Caco-2 (cell line): ENCODE measurements at regions of chr6 and their contacts with region 1.

Region 1: GRCh38 chr6:142112451-142113061 is 20.2 kb upstream of the GJE1 start:
- DNase-seq: peak; percentile 72 to 76
- H3K4me3 ChIP-seq: no peak overlapping the region
- H3K4me3 Mint-ChIP-seq: no peak overlapping the region
- H3K27ac Mint-ChIP-seq: no peak overlapping the region
- H3K4me1 ChIP-seq: no peaks in the 10 kb centered on the region
- H3K4me1 Mint-ChIP-seq: no peaks in the 10 kb centered on the region
- H3K27me3 ChIP-seq: no peaks in the 10 kb centered on the region
- H3K27me3 Mint-ChIP-seq: peaks cover 4% of the 10 kb centered on the region
- CTCF ChIP-seq: peak; percentile 71 to 86

Region 2: DNA sequence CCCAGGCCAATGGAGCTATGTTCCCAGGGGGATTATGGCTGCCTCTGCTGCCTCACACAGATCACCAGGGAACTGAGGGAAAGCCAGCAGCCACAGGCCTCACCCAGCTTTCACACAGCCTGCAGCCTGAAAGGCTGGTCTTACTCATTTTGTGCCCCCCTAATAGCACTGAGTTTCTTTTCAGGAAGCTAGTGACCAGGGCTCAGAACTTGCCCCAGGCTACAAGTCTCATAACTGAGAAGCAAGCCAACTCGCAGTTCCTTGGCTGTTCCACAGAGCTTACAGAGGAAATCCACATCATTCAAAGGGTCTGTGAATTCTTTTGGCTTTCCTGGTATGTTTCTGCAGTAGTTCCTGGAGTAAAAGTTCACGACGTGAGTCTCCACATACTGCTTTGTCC is 504.6 kb before region 1 on chr6:
- CTCF ChIA-PET with region 1: no interaction called
- POLR2A ChIA-PET with region 1: no interaction called
- intact Hi-C with region 1: no loop called
- DNase-seq: no peak
- H3K4me3 ChIP-seq: no peak overlapping the region
- H3K4me3 Mint-ChIP-seq: no peak overlapping the region
- H3K27ac Mint-ChIP-seq: no peak overlapping the region
- H3K4me1 ChIP-seq: no peaks in the 10 kb centered on the region
- H3K4me1 Mint-ChIP-seq: no peaks in the 10 kb centered on the region
- H3K27me3 ChIP-seq: no peaks in the 10 kb centered on the region
- H3K27me3 Mint-ChIP-seq: no peaks in the 10 kb centered on the region
- CTCF ChIP-seq: no peak

Region 3: DNA sequence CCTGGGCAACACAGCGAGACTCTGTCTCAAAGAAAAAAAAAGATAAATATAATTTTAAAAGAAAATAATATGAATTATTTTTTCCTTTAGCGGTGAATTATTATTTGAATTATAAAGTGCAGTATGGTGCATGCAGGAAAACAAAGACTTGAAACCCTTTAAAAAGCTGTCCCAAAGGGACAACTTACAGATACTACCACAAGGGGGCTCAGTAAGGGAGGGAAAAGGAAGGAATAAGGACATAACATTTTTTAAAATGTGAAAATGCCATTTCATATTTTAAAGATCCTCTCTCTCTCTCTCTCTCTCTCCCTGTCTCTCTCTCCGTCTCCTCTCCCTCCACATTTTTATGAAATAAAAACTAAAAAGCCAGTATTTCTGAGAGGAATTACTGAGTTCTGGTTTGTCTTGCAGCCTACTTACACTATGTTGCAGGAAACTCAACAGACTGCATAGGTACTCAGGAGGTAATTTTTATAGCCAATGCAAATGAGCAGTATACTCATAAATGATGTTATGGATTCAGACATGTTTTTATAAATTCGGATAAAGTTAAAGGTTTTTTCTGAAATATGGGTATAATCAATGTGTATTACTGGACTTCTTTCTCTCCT is 434.9 kb before region 1 on chr6:
- CTCF ChIA-PET with region 1: no interaction called
- POLR2A ChIA-PET with region 1: no interaction called
- intact Hi-C with region 1: loop called (anchors 1 kb)
- DNase-seq: peak in 1 of 2 experiments; percentile 28
- H3K4me3 ChIP-seq: no peak overlapping the region
- H3K4me3 Mint-ChIP-seq: no peak overlapping the region
- H3K27ac Mint-ChIP-seq: no peak overlapping the region
- H3K4me1 ChIP-seq: no peaks in the 10 kb centered on the region
- H3K4me1 Mint-ChIP-seq: no peaks in the 10 kb centered on the region
- H3K27me3 ChIP-seq: no peaks in the 10 kb centered on the region
- H3K27me3 Mint-ChIP-seq: no peaks in the 10 kb centered on the region
- CTCF ChIP-seq: peak; percentile 34 to 70

Region 4: GRCh38 chr6:141851062-141851461 is 261.5 kb before region 1 on chr6:
- CTCF ChIA-PET with region 1: no interaction called
- POLR2A ChIA-PET with region 1: no interaction called
- intact Hi-C with region 1: loop called (anchors 10 kb)
- DNase-seq: no peak
- H3K4me3 ChIP-seq: no peak overlapping the region
- H3K4me3 Mint-ChIP-seq: no peak overlapping the region
- H3K27ac Mint-ChIP-seq: no peak overlapping the region
- H3K4me1 ChIP-seq: no peaks in the 10 kb centered on the region
- H3K4me1 Mint-ChIP-seq: no peaks in the 10 kb centered on the region
- H3K27me3 ChIP-seq: no peaks in the 10 kb centered on the region
- H3K27me3 Mint-ChIP-seq: peaks cover 3% of the 10 kb centered on the region
- CTCF ChIP-seq: no peak

Region 5: GRCh38 chr6:142155895-142156757 is 43.6 kb after region 1 on chr6:
- CTCF ChIA-PET with region 1: no interaction called
- POLR2A ChIA-PET with region 1: no interaction called
- intact Hi-C with region 1: no loop called
- DNase-seq: peak in 1 of 2 experiments; percentile 13
- H3K4me3 ChIP-seq: no peak overlapping the region
- H3K4me3 Mint-ChIP-seq: no peak overlapping the region
- H3K27ac Mint-ChIP-seq: no peak overlapping the region
- H3K4me1 ChIP-seq: no peaks in the 10 kb centered on the region
- H3K4me1 Mint-ChIP-seq: no peaks in the 10 kb centered on the region
- H3K27me3 ChIP-seq: no peaks in the 10 kb centered on the region
- H3K27me3 Mint-ChIP-seq: no peaks in the 10 kb centered on the region
- CTCF ChIP-seq: peak; percentile 36 to 46